ENCODE measurements at regions of chr11 and their contacts with region 1.

Region 1: GRCh38 chr11:119084663-119085436 is at the start of gene HMBS:
- DNase-seq: peak; percentile 95
- ATAC-seq: peak; percentile 93
- H3K4me3 Mint-ChIP-seq: peak within 1 kb of the TSS; percentile 99
- H3K27ac Mint-ChIP-seq: peak within 1 kb of the TSS; percentile 97
- H3K4me1 Mint-ChIP-seq: peaks cover 18% of the 10 kb centered on the region
- H3K27me3 Mint-ChIP-seq: no peaks in the 10 kb centered on the region
- CTCF ChIP-seq: no peak
- total RNA-seq, gene HMBS: 33.6 to 36.1 TPM

Region 2: DNA sequence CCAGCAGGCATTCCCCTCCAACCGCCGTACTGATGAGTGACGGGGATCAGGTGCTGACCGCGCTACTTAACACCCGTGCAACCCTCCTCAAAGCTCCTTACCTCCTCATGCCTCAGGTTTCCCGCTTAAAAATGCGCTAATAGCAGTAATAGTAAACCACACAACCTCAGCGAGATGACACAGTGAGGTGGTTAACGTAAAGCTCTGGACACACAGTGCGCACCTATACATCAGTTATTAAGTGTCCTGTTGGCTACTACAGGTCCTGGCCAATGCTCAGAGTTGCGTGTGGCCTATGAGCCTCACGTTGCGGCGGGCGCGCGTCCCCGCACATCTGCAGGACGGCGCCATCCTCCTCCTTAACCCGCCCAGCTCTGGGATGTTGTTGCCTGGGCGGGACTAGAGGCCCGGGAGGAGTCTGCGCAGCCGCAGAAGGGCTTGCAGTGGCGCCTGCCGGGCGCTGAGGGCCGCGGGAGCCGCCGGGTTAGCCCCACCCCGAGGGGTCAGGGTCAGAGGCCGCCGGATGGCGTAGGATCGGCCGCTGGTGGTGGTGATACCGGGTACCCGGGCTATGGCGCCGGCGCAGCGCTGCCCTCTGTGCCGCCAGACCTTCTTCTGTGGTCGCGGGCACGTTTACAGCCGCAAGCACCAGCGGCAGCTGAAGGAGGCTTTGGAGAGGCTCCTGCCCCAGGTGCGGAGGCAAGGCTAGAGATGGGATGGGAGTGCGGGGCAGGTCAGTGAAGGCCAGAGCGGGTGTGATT is 87.0 kb before region 1 on chr11 and contains the start of gene CENATAC:
- CTCF ChIA-PET with region 1: no interaction called
- POLR2A ChIA-PET with region 1: interaction called, 11 read pairs
- intact Hi-C with region 1: no loop called
- DNase-seq: peak; percentile 97
- ATAC-seq: peak; percentile 97
- H3K4me3 Mint-ChIP-seq: peak within 1 kb of the TSS; percentile 97
- H3K27ac Mint-ChIP-seq: peak within 1 kb of the TSS; percentile 99
- H3K4me1 Mint-ChIP-seq: peaks cover 31% of the 10 kb centered on the region
- H3K27me3 Mint-ChIP-seq: no peaks in the 10 kb centered on the region
- CTCF ChIP-seq: no peak
- total RNA-seq, gene CENATAC: 22.0 to 24.1 TPM

Region 3: DNA sequence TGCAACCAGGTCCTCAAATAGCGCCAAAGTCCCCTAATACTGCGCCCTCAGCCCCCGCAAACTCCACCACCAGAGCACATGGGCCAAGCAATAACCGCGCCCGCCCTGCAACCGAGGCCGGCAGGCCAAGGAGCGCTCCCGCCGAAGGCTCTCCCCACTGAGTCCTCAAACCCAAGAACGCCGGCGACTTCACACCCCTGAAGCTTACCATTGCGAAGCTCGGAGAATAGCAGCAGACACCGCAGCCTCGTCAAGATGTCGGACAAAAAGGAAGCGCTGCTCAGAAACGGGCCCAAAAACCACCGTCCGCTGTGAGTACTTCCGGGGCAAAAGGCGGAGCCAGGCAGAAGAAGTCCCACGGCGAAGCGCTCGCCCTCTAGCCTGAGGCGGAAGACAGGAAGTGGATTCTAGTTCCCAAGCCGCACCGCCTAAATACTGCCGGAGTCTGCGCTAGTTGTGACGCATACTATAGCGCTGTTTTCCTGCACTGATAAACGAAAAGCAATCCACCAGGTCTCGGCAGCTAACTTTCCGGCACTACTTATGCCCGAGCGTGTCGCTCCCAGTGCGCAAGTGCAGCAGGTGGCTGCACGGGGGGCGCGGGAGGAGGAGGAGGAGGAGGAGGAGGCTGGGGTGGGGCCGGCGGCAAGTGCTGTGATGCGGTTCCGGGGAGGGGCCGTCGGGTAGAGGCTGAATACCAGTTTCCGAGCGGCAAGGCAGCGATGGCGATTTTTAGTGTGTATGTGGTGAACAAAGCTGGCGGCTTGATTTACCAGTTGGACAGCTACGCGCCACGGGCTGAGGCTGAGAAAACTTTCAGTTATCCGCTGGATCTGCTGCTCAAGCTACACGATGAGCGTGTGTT is 66.5 kb before region 1 on chr11 and contains the starts of genes RPS25 and TRAPPC4:
- CTCF ChIA-PET with region 1: no interaction called
- POLR2A ChIA-PET with region 1: interaction called, 16 read pairs
- intact Hi-C with region 1: no loop called
- DNase-seq: peak; percentile 97
- ATAC-seq: peak; percentile 91
- H3K4me3 Mint-ChIP-seq: peak within 1 kb of the TSS; percentile 99
- H3K27ac Mint-ChIP-seq: peak within 1 kb of the TSS; percentile 99
- H3K4me1 Mint-ChIP-seq: peaks cover 53% of the 10 kb centered on the region
- H3K27me3 Mint-ChIP-seq: no peaks in the 10 kb centered on the region
- CTCF ChIP-seq: no peak
- total RNA-seq, gene RPS25: 1,901 to 1,911 TPM
- total RNA-seq, gene TRAPPC4: 69.5 to 71.4 TPM

Region 4: GRCh38 chr11:119038884-119039283 is 46.0 kb before region 1 on chr11:
- CTCF ChIA-PET with region 1: no interaction called
- POLR2A ChIA-PET with region 1: no interaction called
- intact Hi-C with region 1: no loop called
- DNase-seq: no peak
- ATAC-seq: no peak
- H3K4me3 Mint-ChIP-seq: no peak overlapping the region
- H3K27ac Mint-ChIP-seq: no peak overlapping the region
- H3K4me1 Mint-ChIP-seq: peaks cover 7% of the 10 kb centered on the region
- H3K27me3 Mint-ChIP-seq: no peaks in the 10 kb centered on the region
- CTCF ChIP-seq: no peak

Region 5: GRCh38 chr11:119067371-119068222 is 17.3 kb before region 1 on chr11 and contains the start of gene VPS11:
- CTCF ChIA-PET with region 1: interaction called, 11 read pairs
- POLR2A ChIA-PET with region 1: interaction called, 12 read pairs
- intact Hi-C with region 1: no loop called
- DNase-seq: peak; percentile 99
- ATAC-seq: peak; percentile 98
- H3K4me3 Mint-ChIP-seq: peak within 1 kb of the TSS; percentile 87
- H3K27ac Mint-ChIP-seq: peak within 1 kb of the TSS; percentile 94
- H3K4me1 Mint-ChIP-seq: peaks cover 34% of the 10 kb centered on the region
- H3K27me3 Mint-ChIP-seq: no peaks in the 10 kb centered on the region
- CTCF ChIP-seq: no peak
- total RNA-seq, gene VPS11: 17.1 to 17.2 TPM

Region 6: DNA sequence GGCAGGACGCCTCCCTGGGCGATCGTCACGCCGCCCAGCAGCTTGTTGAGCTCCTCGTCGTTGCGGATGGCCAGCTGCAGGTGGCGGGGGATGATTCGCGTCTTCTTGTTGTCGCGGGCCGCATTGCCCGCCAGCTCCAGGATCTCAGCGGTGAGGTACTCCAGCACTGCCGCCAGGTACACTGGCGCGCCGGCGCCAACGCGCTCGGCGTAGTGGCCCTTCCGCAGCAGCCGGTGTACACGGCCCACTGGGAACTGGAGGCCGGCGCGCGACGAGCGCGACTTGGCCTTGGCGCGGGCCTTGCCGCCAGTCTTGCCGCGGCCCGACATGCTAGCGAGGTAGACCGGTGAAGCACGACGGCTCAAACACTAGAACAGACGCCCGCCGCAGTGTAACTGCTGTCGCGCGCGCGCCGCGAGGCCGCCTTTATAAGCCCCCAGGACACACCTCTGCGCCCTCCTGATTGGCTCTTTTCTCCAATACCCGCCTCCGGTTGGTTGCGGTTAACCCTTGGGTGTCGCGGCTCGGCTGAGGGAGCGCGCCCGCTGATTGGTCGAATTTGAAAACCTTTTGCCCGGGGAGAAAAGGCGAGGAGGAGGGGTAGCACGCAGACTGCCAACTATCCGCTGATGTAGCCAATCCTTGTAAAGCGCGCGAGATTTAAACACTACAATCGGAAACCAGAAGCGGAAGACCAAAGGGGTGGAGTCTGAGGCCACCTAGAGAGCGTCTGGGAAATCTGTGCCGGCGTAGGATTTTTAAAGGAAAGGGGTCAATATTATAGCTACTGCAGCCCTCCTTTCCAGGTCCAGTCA is 10.4 kb after region 1 on chr11:
- CTCF ChIA-PET with region 1: interaction called, 6 read pairs
- POLR2A ChIA-PET with region 1: interaction called, 74 read pairs
- intact Hi-C with region 1: no loop called
- DNase-seq: peak; percentile 100
- ATAC-seq: peak; percentile 86
- H3K4me3 Mint-ChIP-seq: peak overlapping the region; percentile 93
- H3K27ac Mint-ChIP-seq: peak overlapping the region; percentile 91
- H3K4me1 Mint-ChIP-seq: peaks cover 41% of the 10 kb centered on the region
- H3K27me3 Mint-ChIP-seq: peaks cover 1% of the 10 kb centered on the region
- CTCF ChIP-seq: no peak

Region 7: DNA sequence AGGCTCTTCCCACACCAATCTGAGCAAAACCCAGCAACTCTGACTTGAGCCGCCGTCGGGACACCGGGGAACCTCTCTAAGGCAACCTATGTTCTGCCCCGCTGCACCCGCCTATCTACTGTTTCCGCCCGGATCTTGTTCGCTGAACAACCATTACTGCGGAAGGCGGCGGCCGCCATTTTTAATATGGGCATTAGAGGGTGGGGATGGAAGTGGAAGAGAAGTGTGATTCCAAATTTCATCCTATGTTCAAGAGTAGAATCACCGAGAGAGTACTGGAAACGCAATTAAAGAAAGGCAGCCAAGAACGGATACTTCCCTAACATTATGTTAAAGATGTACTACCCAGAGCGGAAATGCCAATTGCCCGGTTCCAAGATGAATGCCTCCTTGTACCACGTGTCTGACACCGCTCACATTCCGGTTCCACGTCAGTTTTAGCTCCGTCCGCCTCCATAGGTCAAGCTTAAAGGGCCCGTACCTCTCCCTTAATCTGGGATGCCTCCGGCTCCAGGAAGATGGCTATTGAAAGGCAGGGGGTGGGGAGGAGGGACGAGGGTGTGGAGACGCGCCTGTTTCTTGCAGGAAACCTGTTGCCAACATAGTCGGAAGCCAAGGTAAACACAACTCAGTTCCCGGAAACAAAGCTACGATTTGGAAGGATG is 17.0 kb after region 1 on chr11 and contains the start of gene DPAGT1:
- CTCF ChIA-PET with region 1: interaction called, 3 read pairs
- POLR2A ChIA-PET with region 1: interaction called, 20 read pairs
- intact Hi-C with region 1: no loop called
- DNase-seq: peak; percentile 93
- ATAC-seq: peak; percentile 82
- H3K4me3 Mint-ChIP-seq: peak within 1 kb of the TSS; percentile 91
- H3K27ac Mint-ChIP-seq: peak within 1 kb of the TSS; percentile 97
- H3K4me1 Mint-ChIP-seq: peaks cover 33% of the 10 kb centered on the region
- H3K27me3 Mint-ChIP-seq: no peaks in the 10 kb centered on the region
- CTCF ChIP-seq: no peak
- total RNA-seq, gene DPAGT1: 51.1 to 52.2 TPM

Measured in activated CD8-positive, alpha-beta T cell treated with anti-CD3 and anti-CD28 coated beads for 36 hours (primary cell).